Naive thymus-derived CD4-positive, alpha-beta T cell (primary cell): ENCODE measurements at regions of chr3 and their contacts with region 1.

Region 1: GRCh38 chr3:87706176-87706575 is 352.6 kb downstream of the CGGBP1 start:
- DNase-seq: no peak
- ATAC-seq: peak; percentile 70
- H3K4me3 ChIP-seq: no peak overlapping the region
- H3K4me3 Mint-ChIP-seq: no peak overlapping the region
- H3K27ac ChIP-seq: no peak overlapping the region
- H3K27ac Mint-ChIP-seq: no peak overlapping the region
- H3K4me1 ChIP-seq: no peaks in the 10 kb centered on the region
- H3K4me1 Mint-ChIP-seq: no peaks in the 10 kb centered on the region
- H3K27me3 ChIP-seq: no peaks in the 10 kb centered on the region
- H3K27me3 Mint-ChIP-seq: peaks cover 0 to 9% (median 5%) of the 10 kb centered on the region in 5 donors

Region 2: DNA sequence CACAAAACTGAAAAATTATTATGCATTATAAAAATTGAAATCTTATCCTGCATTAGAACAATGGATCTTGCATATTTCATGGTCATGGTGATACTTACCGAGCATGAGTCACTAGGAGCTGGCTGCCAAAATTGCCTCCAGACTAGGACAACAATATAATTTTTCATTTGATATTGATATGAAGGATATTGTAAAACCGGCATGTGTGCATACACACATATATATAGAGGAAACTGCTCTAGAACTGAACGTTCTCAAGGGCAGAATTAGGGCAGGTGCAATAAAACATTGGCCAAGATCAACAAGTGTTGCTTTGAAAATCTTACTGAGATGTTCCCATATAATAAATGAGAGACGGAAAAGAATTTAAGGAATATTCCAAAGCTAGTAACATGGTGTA is 110.4 kb before region 1 on chr3:
- CTCF ChIA-PET with region 1: no interaction called
- POLR2A ChIA-PET with region 1: no interaction called
- intact Hi-C with region 1: loop called in 1 of 2 experiments (anchors 10 kb)
- DNase-seq: no peak
- ATAC-seq: no peak
- H3K4me3 ChIP-seq: no peak overlapping the region
- H3K4me3 Mint-ChIP-seq: no peak overlapping the region
- H3K27ac ChIP-seq: no peak overlapping the region
- H3K27ac Mint-ChIP-seq: no peak overlapping the region
- H3K4me1 ChIP-seq: no peaks in the 10 kb centered on the region
- H3K4me1 Mint-ChIP-seq: no peaks in the 10 kb centered on the region
- H3K27me3 ChIP-seq: no peaks in the 10 kb centered on the region
- H3K27me3 Mint-ChIP-seq: no peaks in the 10 kb centered on the region

Region 3: GRCh38 chr3:87674397-87675161 is 31.6 kb before region 1 on chr3:
- CTCF ChIA-PET with region 1: no interaction called
- POLR2A ChIA-PET with region 1: no interaction called
- intact Hi-C with region 1: no loop called
- DNase-seq: no peak
- ATAC-seq: no peak
- H3K4me3 ChIP-seq: no peak overlapping the region
- H3K4me3 Mint-ChIP-seq: no peak overlapping the region
- H3K27ac ChIP-seq: no peak overlapping the region
- H3K27ac Mint-ChIP-seq: no peak overlapping the region
- H3K4me1 ChIP-seq: no peaks in the 10 kb centered on the region
- H3K4me1 Mint-ChIP-seq: peaks cover 0 to 2% (median 0%) of the 10 kb centered on the region in 7 donors
- H3K27me3 ChIP-seq: no peaks in the 10 kb centered on the region
- H3K27me3 Mint-ChIP-seq: peaks cover 0 to 5% (median 0%) of the 10 kb centered on the region in 5 donors

Region 4: DNA sequence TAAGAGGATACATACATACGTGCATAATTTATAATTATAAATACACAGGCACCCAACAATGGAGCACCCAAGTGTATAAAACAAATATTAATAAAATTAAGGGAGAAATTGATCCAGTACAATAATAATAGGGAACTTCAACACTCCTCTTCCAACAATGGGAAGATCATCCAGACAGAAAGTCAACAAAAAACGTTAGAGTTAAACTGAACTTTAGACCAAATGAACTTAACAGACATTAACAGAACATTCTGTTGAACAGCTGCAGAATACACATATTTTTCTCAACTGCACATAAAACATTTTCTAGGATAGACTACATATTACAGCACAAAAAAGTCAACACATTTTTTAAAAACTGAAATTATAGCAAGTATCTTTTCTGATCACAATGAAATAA is 12.9 kb after region 1 on chr3:
- CTCF ChIA-PET with region 1: no interaction called
- POLR2A ChIA-PET with region 1: no interaction called
- intact Hi-C with region 1: no loop called
- DNase-seq: no peak
- ATAC-seq: no peak
- H3K4me3 ChIP-seq: no peak overlapping the region
- H3K4me3 Mint-ChIP-seq: no peak overlapping the region
- H3K27ac ChIP-seq: no peak overlapping the region
- H3K27ac Mint-ChIP-seq: no peak overlapping the region
- H3K4me1 ChIP-seq: no peaks in the 10 kb centered on the region
- H3K4me1 Mint-ChIP-seq: peaks cover 0 to 2% (median 0%) of the 10 kb centered on the region in 7 donors
- H3K27me3 ChIP-seq: no peaks in the 10 kb centered on the region
- H3K27me3 Mint-ChIP-seq: peaks cover 0 to 6% (median 0%) of the 10 kb centered on the region in 5 donors